HCT116 (cell line): ENCODE measurements at regions of chr2 and their contacts with region 1.

Region 1: GRCh38 chr2:96801005-96801785 is 14.9 kb upstream of the CNNM3 start:
- DNase-seq: no peak
- ATAC-seq: peak; percentile 96
- H3K4me3 ChIP-seq: no peak overlapping the region
- H3K27ac ChIP-seq: no peak overlapping the region; the same call in 1 of the 2 replicates
- H3K4me1 ChIP-seq: peaks cover 0 to 5% of the 10 kb centered on the region in 2 experiments; a peak in 1 of 4 replicates
- H3K27me3 ChIP-seq: no peaks in the 10 kb centered on the region
- CTCF ChIP-seq: peak; percentile 53 to 87 (median 76); a peak in 5 of 6 replicates
- POLR2A ChIP-seq: no peak
- RAD21 ChIP-seq: peak; percentile 90

Region 2: GRCh38 chr2:96602330-96602823 is 198.8 kb before region 1 on chr2:
- CTCF ChIA-PET with region 1: no interaction called
- POLR2A ChIA-PET with region 1: no interaction called
- RAD21 ChIA-PET with region 1: no interaction called
- intact Hi-C with region 1: loop called (anchors 2 kb)
- DNase-seq: no peak
- ATAC-seq: peak; percentile 69; the same call in 1 of the 2 replicates
- H3K4me3 ChIP-seq: no peak overlapping the region
- H3K27ac ChIP-seq: no peak overlapping the region
- H3K4me1 ChIP-seq: no peaks in the 10 kb centered on the region
- H3K27me3 ChIP-seq: no peaks in the 10 kb centered on the region
- CTCF ChIP-seq: peak; percentile 23 to 30 (median 27); a peak in 2 of 6 replicates
- POLR2A ChIP-seq: no peak
- RAD21 ChIP-seq: peak; percentile 50; the same call in 1 of the 2 replicates